Colonic mucosa (tissue), 4 donors: ENCODE measurements at regions of chr20 and their contacts with region 1.

Region 1: GRCh38 chr20:63864847-63865640 is at the start of gene TPD52L2:
- DNase-seq: peak; percentile 99
- H3K4me3 ChIP-seq: peak within 1 kb of the TSS; percentile 94
- H3K27ac ChIP-seq: peak within 1 kb of the TSS; percentile 97
- H3K4me1 ChIP-seq: peaks cover 11% of the 10 kb centered on the region
- H3K27me3 ChIP-seq: no peaks in the 10 kb centered on the region
- CTCF ChIP-seq: no peak
- total RNA-seq, gene TPD52L2: 54.0 to 66.1 TPM

Region 2: GRCh38 chr20:63537525-63538203 is 327.4 kb before region 1 on chr20:
- intact Hi-C with region 1: loop called (anchors 10 kb)
- DNase-seq: peak; percentile 97
- H3K4me3 ChIP-seq: peak overlapping the region; percentile 45
- H3K27ac ChIP-seq: peak overlapping the region; percentile 98
- H3K4me1 ChIP-seq: peaks cover 12% of the 10 kb centered on the region
- H3K27me3 ChIP-seq: no peaks in the 10 kb centered on the region
- CTCF ChIP-seq: peak; percentile 95

Region 3: DNA sequence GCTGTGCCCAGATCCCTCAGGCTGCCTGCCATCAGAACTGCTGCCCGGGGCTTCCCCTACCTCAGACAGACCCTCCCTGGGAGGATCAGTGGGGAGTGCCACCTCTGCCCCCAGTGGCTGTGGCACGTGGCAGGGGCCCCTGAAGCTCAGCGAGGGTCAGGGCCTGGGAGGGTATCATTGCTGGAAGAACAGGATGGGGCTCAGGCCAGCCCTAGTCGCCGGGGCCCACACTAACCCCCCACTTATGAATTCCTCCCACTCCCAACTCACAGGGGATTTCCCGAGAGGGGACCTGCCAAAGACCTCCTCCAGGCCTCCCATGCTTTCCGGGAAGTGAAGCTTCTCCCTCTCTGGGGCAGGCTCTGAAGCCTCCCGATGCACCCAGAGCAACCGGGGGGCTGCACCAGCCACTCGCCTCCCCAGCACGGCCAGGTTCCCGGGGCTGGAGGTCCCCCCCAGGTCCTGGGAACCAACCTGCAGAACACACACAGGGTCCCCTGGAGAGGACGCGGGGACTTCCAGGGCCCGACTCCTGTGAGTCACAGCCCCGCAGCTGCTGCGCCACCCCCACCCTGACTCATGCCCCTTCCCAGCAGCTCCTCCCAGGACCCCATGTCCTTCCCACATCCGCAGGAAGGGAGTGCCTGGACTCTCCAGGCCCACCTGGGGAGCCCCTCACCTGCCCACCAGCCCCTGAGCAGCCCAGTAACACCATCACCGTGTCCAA is 166.1 kb before region 1 on chr20:
- intact Hi-C with region 1: no loop called
- DNase-seq: no peak
- H3K4me3 ChIP-seq: peak overlapping the region; percentile 5
- H3K27ac ChIP-seq: peak overlapping the region; percentile 60
- H3K4me1 ChIP-seq: peaks cover 27% of the 10 kb centered on the region
- H3K27me3 ChIP-seq: no peaks in the 10 kb centered on the region
- CTCF ChIP-seq: no peak

Region 4: DNA sequence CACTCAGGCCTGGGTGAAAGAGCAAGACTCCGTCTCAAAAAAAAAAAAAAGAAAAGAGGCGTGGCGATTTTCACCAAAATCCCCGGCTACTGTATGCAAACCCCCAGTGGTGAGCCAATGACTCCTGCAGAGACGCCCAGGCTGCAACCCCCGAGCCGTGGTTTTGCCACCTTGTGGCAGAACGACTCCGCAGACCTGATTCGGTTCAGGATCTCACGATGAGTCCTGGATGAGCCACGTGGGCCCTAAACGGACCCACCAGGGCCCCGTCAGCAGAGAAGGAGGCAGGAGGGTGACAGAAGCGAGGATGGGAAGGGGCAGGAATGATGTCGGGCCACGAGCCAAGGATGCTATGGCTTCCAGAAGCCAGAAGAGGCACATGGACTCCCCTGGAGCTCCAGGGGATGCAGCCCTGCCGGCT is 83.0 kb before region 1 on chr20:
- intact Hi-C with region 1: loop called (anchors 5 kb)
- DNase-seq: no peak
- H3K4me3 ChIP-seq: no peak overlapping the region
- H3K27ac ChIP-seq: no peak overlapping the region
- H3K4me1 ChIP-seq: no peaks in the 10 kb centered on the region
- H3K27me3 ChIP-seq: no peaks in the 10 kb centered on the region
- CTCF ChIP-seq: no peak

Region 5: DNA sequence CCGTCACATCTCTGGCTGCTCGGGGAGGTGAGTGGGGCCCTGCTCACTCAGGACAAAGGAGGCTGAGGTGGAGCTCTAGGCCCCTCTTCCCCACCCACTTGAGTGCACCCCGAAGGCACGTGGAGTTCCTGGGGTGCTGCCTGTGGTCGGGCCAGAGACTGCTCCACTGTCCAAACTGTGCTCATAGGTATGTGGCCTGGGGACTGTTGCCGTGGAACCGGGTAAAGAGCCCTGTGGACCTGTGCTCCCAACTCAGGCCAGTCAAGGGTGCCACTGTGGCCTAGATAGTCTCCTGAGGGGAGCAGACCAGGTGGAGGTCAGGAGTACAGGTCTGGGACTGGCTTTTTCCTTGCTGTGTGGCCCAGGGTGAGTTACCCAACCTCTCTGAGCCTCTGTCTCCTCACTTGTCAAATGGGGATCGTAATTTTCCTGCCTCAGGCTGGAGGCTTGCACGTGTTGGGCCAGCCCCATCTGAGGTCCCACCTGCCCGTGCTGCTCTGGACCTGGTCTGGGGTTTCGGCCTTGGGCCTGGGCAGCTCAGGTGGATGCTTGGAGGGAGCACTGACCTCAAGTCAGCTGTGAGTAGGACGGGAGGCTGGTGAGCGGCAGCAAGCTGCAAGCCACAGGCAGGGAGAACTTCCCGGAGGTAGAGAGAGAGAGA is 254.8 kb after region 1 on chr20:
- intact Hi-C with region 1: no loop called
- DNase-seq: no peak
- H3K4me3 ChIP-seq: no peak overlapping the region
- H3K27ac ChIP-seq: no peak overlapping the region
- H3K4me1 ChIP-seq: no peaks in the 10 kb centered on the region
- H3K27me3 ChIP-seq: no peaks in the 10 kb centered on the region
- CTCF ChIP-seq: no peak